Sciatic nerve (tissue), 2 donors: ENCODE measurements at regions of chr1 and their contacts with region 1.

Region 1: DNA sequence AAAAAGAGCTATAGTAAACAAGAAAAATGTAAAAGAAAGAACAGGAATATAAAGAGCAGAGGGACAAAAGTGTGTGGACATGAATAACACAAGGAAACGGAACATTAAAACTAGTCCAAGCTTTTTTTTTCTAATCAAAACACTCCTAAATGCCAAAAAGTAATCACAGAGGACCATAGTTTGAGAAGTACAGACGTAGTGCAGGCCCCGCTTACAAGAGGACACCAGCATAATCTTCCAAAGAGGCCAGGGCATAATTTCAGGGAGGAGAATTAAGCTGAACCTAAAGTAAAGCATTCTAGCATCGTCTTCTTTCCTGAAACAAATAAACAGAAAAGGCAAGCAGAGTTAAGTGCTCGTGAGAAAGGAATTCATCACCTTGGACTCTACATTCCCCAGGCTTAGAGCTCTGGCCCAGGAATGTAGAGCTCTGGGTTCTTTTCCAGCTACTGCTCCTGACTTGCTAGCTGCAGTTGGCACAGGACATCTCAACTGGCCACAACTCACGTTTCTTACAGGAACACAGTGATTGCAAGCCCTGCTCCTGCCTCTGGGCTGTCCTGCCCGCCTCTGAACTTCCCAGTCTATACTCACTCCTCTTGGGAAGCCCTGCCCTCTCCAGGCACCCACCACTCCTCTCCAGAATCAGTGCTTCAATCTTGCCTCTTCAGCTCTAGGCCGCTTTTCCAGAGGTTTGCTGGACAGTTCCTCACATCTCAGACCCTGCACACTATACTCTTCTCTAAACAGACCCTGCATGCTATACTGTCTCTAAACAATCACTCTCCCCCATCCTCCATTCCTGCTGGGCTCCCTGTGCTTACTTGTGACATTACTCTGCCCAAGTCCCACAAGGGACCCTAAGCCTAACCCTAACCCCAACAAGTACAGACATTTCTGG is 9.8 kb downstream of the RGS8 start:
- DNase-seq: no peak
- ATAC-seq: peak; percentile 78

Region 2: GRCh38 chr1:182629499-182630096 is 45.0 kb before region 1 on chr1:
- intact Hi-C with region 1: no loop called
- DNase-seq: no peak
- ATAC-seq: no peak

Region 3: GRCh38 chr1:182720463-182720862 is 45.9 kb after region 1 on chr1:
- intact Hi-C with region 1: no loop called
- DNase-seq: no peak
- ATAC-seq: no peak

Region 4: DNA sequence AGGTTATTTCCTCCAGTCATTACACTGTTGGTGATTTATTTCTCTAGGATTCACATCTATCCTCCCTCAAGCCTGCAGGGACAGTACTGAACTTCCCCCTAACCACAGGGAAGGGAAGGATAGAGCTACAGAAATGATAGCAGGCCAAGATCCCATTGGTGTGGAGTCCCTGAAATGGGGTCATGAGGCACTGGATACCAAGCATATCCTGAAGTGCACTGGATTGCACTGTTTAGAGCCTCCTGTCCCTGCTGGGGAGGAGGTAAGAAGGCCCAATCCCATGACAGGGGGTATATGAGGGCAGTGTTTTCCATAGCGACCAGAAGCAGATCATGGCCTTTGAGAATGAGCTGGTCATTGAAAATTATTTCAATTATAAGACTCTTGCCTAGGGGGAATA is 1769.0 kb after region 1 on chr1:
- intact Hi-C with region 1: loop called (anchors 5 kb)
- DNase-seq: no peak
- ATAC-seq: peak; percentile 28